K562 (cell line): ENCODE measurements at regions of chr1 and their contacts with region 1.

Region 1: DNA sequence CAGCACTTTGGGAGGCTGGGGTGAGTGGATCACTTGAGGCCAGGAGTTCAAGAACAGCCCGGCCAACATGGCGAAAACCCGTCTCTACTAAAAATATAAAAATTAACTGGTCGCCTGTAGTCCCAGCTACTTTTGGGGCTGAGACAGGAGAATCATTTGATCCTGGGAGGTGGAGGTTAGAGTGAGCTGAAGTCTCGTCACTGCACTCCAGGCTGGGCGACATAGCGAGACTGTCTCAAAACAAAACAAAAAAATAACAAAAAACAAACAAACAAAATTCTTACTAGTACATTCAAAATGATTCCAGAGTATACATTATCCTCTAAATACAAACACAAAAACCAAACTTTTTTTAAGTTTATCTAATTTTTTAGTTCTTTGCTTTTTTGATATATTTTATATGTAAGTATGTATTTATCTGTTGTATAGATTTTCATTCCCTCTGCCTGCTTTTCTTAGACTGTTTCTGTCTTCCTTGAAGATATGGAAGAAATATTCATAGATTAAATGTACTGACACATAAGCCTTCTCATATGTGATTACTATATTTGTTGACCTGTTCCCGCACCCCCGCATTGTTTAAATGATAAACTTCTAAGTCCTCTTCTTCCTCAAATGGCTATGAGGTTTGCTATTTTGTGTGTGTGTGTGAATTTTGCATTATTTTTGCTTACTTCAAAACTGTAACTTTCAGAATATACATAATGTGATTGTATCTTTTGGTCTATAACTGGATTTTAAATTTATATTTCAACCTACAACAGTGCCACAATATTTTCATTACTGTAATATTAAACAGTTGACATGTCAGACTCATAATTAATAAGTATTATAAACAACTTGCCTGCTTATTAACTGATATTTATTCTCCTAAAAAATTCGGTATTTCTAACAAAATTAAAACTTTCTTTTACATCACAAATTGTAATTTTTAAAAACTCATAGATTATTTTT is 1674.1 kb upstream of the B3GALT2 start:
- DNase-seq: peak in 1 of 4 experiments; percentile 68
- ATAC-seq: peak; percentile 79
- H3K4me3 ChIP-seq: peak overlapping the region; percentile 57
- H3K27ac ChIP-seq: peak overlapping the region; percentile 77
- H3K4me1 ChIP-seq: peaks cover 0 to 8% of the 10 kb centered on the region in 2 experiments; a peak in 1 of 5 replicates
- H3K27me3 ChIP-seq: no peaks in the 10 kb centered on the region
- CTCF ChIP-seq: no peak
- EP300 ChIP-seq: no peak
- POLR2A ChIP-seq: no peak
- RAD21 ChIP-seq: peak in 1 of 2 experiments; percentile 12; a peak in 1 of 4 replicates

Region 2: GRCh38 chr1:193111641-193112090 is 1748.9 kb before region 1 on chr1:
- CTCF ChIA-PET with region 1: no interaction called
- POLR2A ChIA-PET with region 1: no interaction called
- in situ Hi-C with region 1: no loop called
- intact Hi-C with region 1: loop called (anchors 2 kb)
- DNase-seq: peak in 1 of 4 experiments; percentile 76
- ATAC-seq: peak; percentile 40
- H3K4me3 ChIP-seq: no peak overlapping the region
- H3K27ac ChIP-seq: peak overlapping the region; percentile 56
- H3K4me1 ChIP-seq: peaks cover 16 to 35% of the 10 kb centered on the region in 2 experiments
- H3K27me3 ChIP-seq: no peaks in the 10 kb centered on the region
- CTCF ChIP-seq: no peak
- EP300 ChIP-seq: peak; percentile 48; the same call in 1 of the 2 replicates
- POLR2A ChIP-seq: no peak
- RAD21 ChIP-seq: no peak

Region 3: GRCh38 chr1:194658090-194658439 is 202.5 kb before region 1 on chr1:
- CTCF ChIA-PET with region 1: no interaction called
- POLR2A ChIA-PET with region 1: interaction called, 5 read pairs
- in situ Hi-C with region 1: no loop called
- intact Hi-C with region 1: loop called (anchors 2 kb)
- DNase-seq: peak; percentile 48 to 86 (median 60)
- ATAC-seq: peak; percentile 93
- H3K4me3 ChIP-seq: peak overlapping the region; percentile 25
- H3K27ac ChIP-seq: peak overlapping the region; percentile 87
- H3K4me1 ChIP-seq: peaks cover 0 to 3% of the 10 kb centered on the region in 2 experiments; a peak in 3 of 5 replicates
- H3K27me3 ChIP-seq: no peaks in the 10 kb centered on the region
- CTCF ChIP-seq: no peak
- EP300 ChIP-seq: peak; percentile 56; the same call in 1 of the 2 replicates
- POLR2A ChIP-seq: no peak; the same call in 1 of the 2 replicates
- RAD21 ChIP-seq: no peak

Region 4: GRCh38 chr1:194698908-194699318 is 161.6 kb before region 1 on chr1:
- CTCF ChIA-PET with region 1: no interaction called
- POLR2A ChIA-PET with region 1: no interaction called
- in situ Hi-C with region 1: no loop called
- intact Hi-C with region 1: loop called (anchors 5 kb)
- DNase-seq: peak; percentile 22 to 88 (median 54)
- ATAC-seq: peak; percentile 99
- H3K4me3 ChIP-seq: no peak overlapping the region
- H3K27ac ChIP-seq: peak overlapping the region; percentile 33
- H3K4me1 ChIP-seq: no peaks in the 10 kb centered on the region; a peak in 1 of 5 replicates
- H3K27me3 ChIP-seq: no peaks in the 10 kb centered on the region
- CTCF ChIP-seq: peak in 2 of 3 experiments; percentile 44 to 49; a peak in 4 of 6 replicates
- EP300 ChIP-seq: peak; percentile 39; the same call in 1 of the 2 replicates
- POLR2A ChIP-seq: no peak
- RAD21 ChIP-seq: peak; percentile 61 to 75

Region 5: DNA sequence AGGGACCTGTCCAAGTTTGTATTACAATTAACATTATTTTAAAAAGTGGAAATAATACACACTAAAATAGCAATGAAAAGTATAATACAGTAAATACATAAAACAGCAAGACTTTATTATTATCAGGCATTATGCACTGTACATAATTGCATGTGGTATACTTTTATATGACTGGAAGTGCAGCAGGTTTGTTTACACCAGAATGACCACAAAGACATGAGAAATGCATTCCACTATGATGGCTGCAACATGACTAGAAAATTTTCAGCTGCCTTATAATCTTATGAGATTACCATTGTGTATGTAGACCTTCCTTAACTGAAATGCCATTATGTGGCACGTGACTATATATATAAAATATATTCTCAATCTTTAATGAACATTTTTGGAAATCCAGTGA is 48.1 kb after region 1 on chr1:
- CTCF ChIA-PET with region 1: no interaction called
- POLR2A ChIA-PET with region 1: no interaction called
- in situ Hi-C with region 1: no loop called
- intact Hi-C with region 1: no loop called
- DNase-seq: no peak
- ATAC-seq: no peak
- H3K4me3 ChIP-seq: no peak overlapping the region
- H3K27ac ChIP-seq: no peak overlapping the region
- H3K4me1 ChIP-seq: no peaks in the 10 kb centered on the region
- H3K27me3 ChIP-seq: no peaks in the 10 kb centered on the region
- CTCF ChIP-seq: no peak
- EP300 ChIP-seq: no peak
- POLR2A ChIP-seq: no peak
- RAD21 ChIP-seq: no peak

Region 6: GRCh38 chr1:194929357-194929756 is 68.8 kb after region 1 on chr1:
- CTCF ChIA-PET with region 1: no interaction called
- POLR2A ChIA-PET with region 1: no interaction called
- in situ Hi-C with region 1: no loop called
- intact Hi-C with region 1: no loop called
- DNase-seq: no peak
- ATAC-seq: no peak
- H3K4me3 ChIP-seq: no peak overlapping the region
- H3K27ac ChIP-seq: no peak overlapping the region
- H3K4me1 ChIP-seq: no peaks in the 10 kb centered on the region
- H3K27me3 ChIP-seq: no peaks in the 10 kb centered on the region
- CTCF ChIP-seq: no peak
- EP300 ChIP-seq: no peak
- POLR2A ChIP-seq: no peak
- RAD21 ChIP-seq: no peak